CD4-positive, alpha-beta memory T cell (primary cell): ENCODE measurements at regions of chr18 and their contacts with region 1.

Region 1: DNA sequence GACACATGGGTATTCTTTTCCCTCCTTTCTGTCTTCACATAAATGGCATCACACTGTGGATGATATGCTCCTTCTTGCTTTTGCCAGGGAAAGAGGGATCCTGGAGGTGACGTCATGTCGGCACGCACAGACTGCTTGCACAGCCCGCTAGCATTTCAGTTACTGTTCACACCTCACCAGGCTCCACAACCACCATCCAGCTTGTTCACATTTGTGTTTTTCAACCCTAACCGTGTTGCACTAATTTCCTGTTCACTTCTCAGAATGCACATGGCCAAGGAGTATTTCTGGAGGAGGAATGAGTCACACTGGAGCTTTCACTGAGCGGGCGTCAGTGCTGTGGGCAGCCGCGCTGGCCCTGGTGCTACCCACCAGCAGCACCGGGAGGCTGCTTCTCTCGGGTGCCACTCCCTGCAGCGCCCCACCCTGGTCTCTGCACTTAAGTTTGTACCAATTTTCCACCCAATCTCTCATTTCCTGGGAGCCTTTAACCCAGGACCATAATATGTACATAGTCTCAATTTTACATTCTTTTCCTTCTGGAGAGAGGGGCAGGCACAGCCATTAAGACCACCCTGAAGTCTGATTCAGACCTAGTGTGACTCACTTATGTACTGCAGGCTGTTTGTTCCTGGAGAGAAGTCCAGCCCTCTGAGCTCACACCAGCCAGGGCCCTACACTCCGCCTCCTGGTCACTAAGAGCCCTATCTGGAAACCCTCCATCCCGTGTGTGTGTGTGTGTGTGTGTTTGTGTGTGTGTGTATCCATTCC is 65.1 kb downstream of the MBP start:
- DNase-seq: peak; percentile 52 to 77 (median 62)
- H3K4me3 ChIP-seq: peak overlapping the region in 1 of 2 donors; percentile 26
- H3K4me3 Mint-ChIP-seq: peak overlapping the region; percentile 76 to 87 (median 81)
- H3K27ac ChIP-seq: peak overlapping the region; percentile 78
- H3K27ac Mint-ChIP-seq: peak overlapping the region; percentile 97 to 100 (median 99)
- H3K4me1 ChIP-seq: peaks cover 100% of the 10 kb centered on the region
- H3K4me1 Mint-ChIP-seq: peaks cover 89 to 100% (median 95%) of the 10 kb centered on the region in 4 donors
- H3K27me3 ChIP-seq: no peaks in the 10 kb centered on the region
- H3K27me3 Mint-ChIP-seq: no peaks in the 10 kb centered on the region

Region 2: DNA sequence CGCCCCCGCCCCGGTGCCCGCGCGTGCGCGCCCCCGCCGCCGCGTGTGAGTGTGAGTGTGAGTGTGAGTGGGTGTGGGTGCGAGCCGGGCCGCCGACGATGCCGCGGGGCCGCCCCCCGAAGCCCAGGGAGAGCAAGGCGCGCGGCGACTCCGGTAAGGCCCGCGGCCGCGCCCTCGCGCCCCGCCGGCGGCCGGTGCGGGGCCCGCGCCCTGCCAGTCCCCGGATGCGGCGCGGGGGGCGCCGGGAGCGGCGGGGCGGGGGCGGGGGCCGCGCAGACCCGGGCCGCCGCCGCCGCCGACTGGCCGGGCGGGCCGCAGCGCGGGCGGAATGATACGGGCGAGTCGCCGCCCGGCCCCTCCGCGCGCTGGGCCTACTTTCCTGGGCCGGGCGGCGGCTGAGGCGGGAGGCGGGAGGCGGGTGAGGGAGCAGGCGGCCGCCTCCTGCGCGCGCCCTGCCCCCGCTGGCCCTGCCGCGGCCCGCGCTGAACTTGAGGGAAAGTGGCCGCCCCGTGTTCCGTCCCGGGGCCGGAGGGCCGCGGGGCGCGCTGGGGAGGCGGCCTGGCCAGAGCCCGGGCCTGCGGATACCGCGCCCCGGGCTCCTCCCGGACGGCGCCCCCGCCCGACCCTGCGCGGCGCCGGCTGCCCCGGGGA is 244.8 kb before region 1 on chr18 and contains the start of gene ZNF236:
- CTCF ChIA-PET with region 1: no interaction called
- POLR2A ChIA-PET with region 1: no interaction called
- intact Hi-C with region 1: loop called (anchors 10 kb)
- DNase-seq: peak; percentile 61 to 74 (median 70)
- H3K4me3 ChIP-seq: peak within 1 kb of the TSS; percentile 93 to 98
- H3K4me3 Mint-ChIP-seq: peak within 1 kb of the TSS; percentile 91 to 97 (median 95)
- H3K27ac ChIP-seq: peak within 1 kb of the TSS; percentile 88
- H3K27ac Mint-ChIP-seq: peak within 1 kb of the TSS; percentile 92 to 97 (median 97)
- H3K4me1 ChIP-seq: peaks cover 47% of the 10 kb centered on the region
- H3K4me1 Mint-ChIP-seq: peaks cover 33 to 69% (median 54%) of the 10 kb centered on the region in 4 donors
- H3K27me3 ChIP-seq: no peaks in the 10 kb centered on the region
- H3K27me3 Mint-ChIP-seq: no peaks in the 10 kb centered on the region
- total RNA-seq, gene ZNF236: 28.3 to 29.1 TPM

Region 3: GRCh38 chr18:77079954-77080682 is 12.6 kb after region 1 on chr18:
- CTCF ChIA-PET with region 1: interaction called, 6 read pairs
- POLR2A ChIA-PET with region 1: interaction called, 11 read pairs
- intact Hi-C with region 1: loop called (anchors 1 kb)
- DNase-seq: peak in 2 of 5 donors; percentile 30 to 55
- H3K4me3 ChIP-seq: no peak overlapping the region
- H3K4me3 Mint-ChIP-seq: peak overlapping the region in 6 of 8 donors; percentile 41 to 69 (median 61)
- H3K27ac ChIP-seq: peak overlapping the region; percentile 38
- H3K27ac Mint-ChIP-seq: peak overlapping the region; percentile 61 to 92 (median 85)
- H3K4me1 ChIP-seq: peaks cover 80% of the 10 kb centered on the region
- H3K4me1 Mint-ChIP-seq: peaks cover 55 to 99% (median 79%) of the 10 kb centered on the region in 4 donors
- H3K27me3 ChIP-seq: no peaks in the 10 kb centered on the region
- H3K27me3 Mint-ChIP-seq: no peaks in the 10 kb centered on the region

Region 4: DNA sequence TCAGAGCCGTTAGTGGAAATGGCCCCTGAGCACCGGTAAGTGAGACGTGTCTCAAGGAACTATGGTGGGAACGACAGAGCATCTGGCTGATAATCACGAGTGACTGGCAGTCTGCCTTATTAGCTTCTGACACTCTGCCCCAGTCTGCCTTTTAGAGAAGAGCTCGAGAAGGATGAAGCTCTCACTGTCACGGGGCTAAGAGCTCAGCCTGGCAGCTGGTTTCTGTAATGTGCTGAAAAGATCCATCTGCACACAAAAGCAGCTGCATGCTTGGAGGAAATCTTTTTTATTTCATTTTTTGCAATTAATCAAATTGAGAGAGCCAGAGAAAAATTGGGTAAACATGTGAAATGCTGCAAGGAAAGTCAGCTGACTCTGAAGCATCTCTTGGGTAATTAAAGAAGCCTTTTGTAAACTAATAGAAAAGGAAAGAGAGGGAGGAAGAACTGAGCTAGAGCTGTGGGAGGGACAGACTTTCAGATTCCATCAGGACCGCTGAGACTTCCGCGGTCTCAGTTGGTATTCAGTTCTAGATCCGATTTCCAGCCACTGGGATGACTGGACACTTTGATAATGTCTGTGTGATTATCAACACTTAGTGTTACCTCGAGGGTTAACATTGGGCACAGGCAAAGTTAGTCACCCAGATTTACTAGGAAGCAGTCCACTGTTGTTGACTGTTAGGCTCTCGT is 40.7 kb after region 1 on chr18:
- CTCF ChIA-PET with region 1: interaction called, 19 read pairs
- POLR2A ChIA-PET with region 1: interaction called, 101 read pairs
- intact Hi-C with region 1: loop called (anchors 1 kb)
- DNase-seq: peak in 3 of 5 donors; percentile 33 to 67 (median 38)
- H3K4me3 ChIP-seq: no peak overlapping the region
- H3K4me3 Mint-ChIP-seq: peak overlapping the region in 7 of 8 donors; percentile 74 to 92 (median 82)
- H3K27ac ChIP-seq: peak overlapping the region; percentile 67
- H3K27ac Mint-ChIP-seq: peak overlapping the region; percentile 86 to 99 (median 97)
- H3K4me1 ChIP-seq: peaks cover 98% of the 10 kb centered on the region
- H3K4me1 Mint-ChIP-seq: peaks cover 78 to 100% (median 88%) of the 10 kb centered on the region in 4 donors
- H3K27me3 ChIP-seq: no peaks in the 10 kb centered on the region
- H3K27me3 Mint-ChIP-seq: no peaks in the 10 kb centered on the region

Region 5: GRCh38 chr18:77132371-77133050 is 65.0 kb after region 1 on chr18 and contains the start of gene MBP:
- CTCF ChIA-PET with region 1: interaction called, 28 read pairs
- POLR2A ChIA-PET with region 1: interaction called, 178 read pairs
- intact Hi-C with region 1: loop called (anchors 1 kb)
- DNase-seq: peak; percentile 58 to 75 (median 70)
- H3K4me3 ChIP-seq: peak within 1 kb of the TSS; percentile 81 to 82
- H3K4me3 Mint-ChIP-seq: peak within 1 kb of the TSS; percentile 98 to 100 (median 98)
- H3K27ac ChIP-seq: peak within 1 kb of the TSS; percentile 85
- H3K27ac Mint-ChIP-seq: peak within 1 kb of the TSS; percentile 94 to 99 (median 97)
- H3K4me1 ChIP-seq: peaks cover 54% of the 10 kb centered on the region
- H3K4me1 Mint-ChIP-seq: peaks cover 38 to 66% (median 50%) of the 10 kb centered on the region in 4 donors
- H3K27me3 ChIP-seq: no peaks in the 10 kb centered on the region
- H3K27me3 Mint-ChIP-seq: no peaks in the 10 kb centered on the region
- total RNA-seq, gene MBP: 179 to 187 TPM

Region 6: GRCh38 chr18:77218642-77219041 is 151.2 kb after region 1 on chr18:
- CTCF ChIA-PET with region 1: no interaction called
- POLR2A ChIA-PET with region 1: no interaction called
- intact Hi-C with region 1: no loop called
- DNase-seq: no peak
- H3K4me3 ChIP-seq: no peak overlapping the region
- H3K4me3 Mint-ChIP-seq: no peak overlapping the region
- H3K27ac ChIP-seq: no peak overlapping the region
- H3K27ac Mint-ChIP-seq: no peak overlapping the region
- H3K4me1 ChIP-seq: no peaks in the 10 kb centered on the region
- H3K4me1 Mint-ChIP-seq: peaks cover 0 to 2% (median under 1%) of the 10 kb centered on the region in 4 donors
- H3K27me3 ChIP-seq: no peaks in the 10 kb centered on the region
- H3K27me3 Mint-ChIP-seq: peaks cover 0 to 6% of the 10 kb centered on the region in 2 donors